HepG2 (cell line): ENCODE measurements at regions of chr16 and their contacts with region 1.

Region 1: GRCh38 chr16:3150346-3151218 is 15.8 kb downstream of the ZNF213 start:
- DNase-seq: peak; percentile 94
- ATAC-seq: peak; percentile 75
- H3K4me3 ChIP-seq: peak overlapping the region; percentile 57 to 78 (median 66)
- H3K27ac ChIP-seq: peak overlapping the region; percentile 46
- H3K4me1 ChIP-seq: peaks cover 43% of the 10 kb centered on the region
- H3K27me3 ChIP-seq: peaks cover 0 to 26% of the 10 kb centered on the region in 2 experiments; a peak in 3 of 5 replicates
- CTCF ChIP-seq: 0 out of 2 replicates have a peak, but pooled peaks have one; percentile 20
- EP300 ChIP-seq: no peak
- POLR2A ChIP-seq: no peak
- RAD21 ChIP-seq: peak; percentile 42; the same call in 1 of the 2 replicates

Region 2: GRCh38 chr16:3129137-3130131 is 21.1 kb before region 1 on chr16:
- CTCF ChIA-PET with region 1: interaction called, 3 read pairs
- POLR2A ChIA-PET with region 1: interaction called, 81 read pairs
- in situ Hi-C with region 1: no loop called
- intact Hi-C with region 1: loop called (anchors 2 kb)
- DNase-seq: peak; percentile 82
- ATAC-seq: peak; percentile 44
- H3K4me3 ChIP-seq: peak overlapping the region; percentile 25 to 67 (median 47); a peak in 5 of 6 replicates
- H3K27ac ChIP-seq: no peak overlapping the region
- H3K4me1 ChIP-seq: peaks cover 46% of the 10 kb centered on the region
- H3K27me3 ChIP-seq: no peaks in the 10 kb centered on the region; a peak in 1 of 5 replicates
- CTCF ChIP-seq: peak; percentile 88
- EP300 ChIP-seq: no peak
- POLR2A ChIP-seq: peak in 1 of 2 experiments; percentile 39; a peak in 1 of 4 replicates
- RAD21 ChIP-seq: peak; percentile 72

Region 3: GRCh38 chr16:3165111-3165822 is 14.7 kb after region 1 on chr16:
- CTCF ChIA-PET with region 1: interaction called, 18 read pairs
- POLR2A ChIA-PET with region 1: interaction called, 8 read pairs
- in situ Hi-C with region 1: no loop called
- intact Hi-C with region 1: loop called (anchors 2 kb)
- DNase-seq: no peak
- ATAC-seq: no peak; the same call in 2 of the 3 replicates
- H3K4me3 ChIP-seq: peak overlapping the region; percentile 37 to 71 (median 61); a peak in 4 of 6 replicates
- H3K27ac ChIP-seq: no peak overlapping the region
- H3K4me1 ChIP-seq: peaks cover 67% of the 10 kb centered on the region
- H3K27me3 ChIP-seq: peaks cover 0 to 12% of the 10 kb centered on the region in 2 experiments; a peak in 1 of 5 replicates
- CTCF ChIP-seq: no peak
- EP300 ChIP-seq: no peak
- POLR2A ChIP-seq: no peak
- RAD21 ChIP-seq: no peak

Region 4: GRCh38 chr16:3173892-3174617 is 23.5 kb after region 1 on chr16:
- CTCF ChIA-PET with region 1: interaction called, 3 read pairs
- POLR2A ChIA-PET with region 1: interaction called, 15 read pairs
- in situ Hi-C with region 1: no loop called
- intact Hi-C with region 1: loop called (anchors 2 kb)
- DNase-seq: peak; percentile 65
- ATAC-seq: no peak
- H3K4me3 ChIP-seq: peak overlapping the region; percentile 5 to 71 (median 50)
- H3K27ac ChIP-seq: no peak overlapping the region
- H3K4me1 ChIP-seq: peaks cover 50% of the 10 kb centered on the region
- H3K27me3 ChIP-seq: peaks cover 0 to under 1% of the 10 kb centered on the region in 2 experiments; a peak in 1 of 5 replicates
- CTCF ChIP-seq: peak; percentile 72
- EP300 ChIP-seq: no peak
- POLR2A ChIP-seq: no peak
- RAD21 ChIP-seq: no peak

Region 5: GRCh38 chr16:3188925-3189825 is 38.6 kb after region 1 on chr16:
- CTCF ChIA-PET with region 1: no interaction called
- POLR2A ChIA-PET with region 1: interaction called, 9 read pairs
- in situ Hi-C with region 1: no loop called
- intact Hi-C with region 1: loop called (anchors 5 kb)
- DNase-seq: peak; percentile 60
- ATAC-seq: peak; percentile 26
- H3K4me3 ChIP-seq: peak overlapping the region; percentile 72 to 91 (median 76)
- H3K27ac ChIP-seq: peak overlapping the region; percentile 40
- H3K4me1 ChIP-seq: peaks cover 43% of the 10 kb centered on the region
- H3K27me3 ChIP-seq: no peaks in the 10 kb centered on the region
- CTCF ChIP-seq: no peak
- EP300 ChIP-seq: peak in 1 of 2 experiments; percentile 14; a peak in 1 of 4 replicates
- POLR2A ChIP-seq: no peak
- RAD21 ChIP-seq: no peak